ENCODE measurements at regions of chr1 and their contacts with region 1.

Region 1: DNA sequence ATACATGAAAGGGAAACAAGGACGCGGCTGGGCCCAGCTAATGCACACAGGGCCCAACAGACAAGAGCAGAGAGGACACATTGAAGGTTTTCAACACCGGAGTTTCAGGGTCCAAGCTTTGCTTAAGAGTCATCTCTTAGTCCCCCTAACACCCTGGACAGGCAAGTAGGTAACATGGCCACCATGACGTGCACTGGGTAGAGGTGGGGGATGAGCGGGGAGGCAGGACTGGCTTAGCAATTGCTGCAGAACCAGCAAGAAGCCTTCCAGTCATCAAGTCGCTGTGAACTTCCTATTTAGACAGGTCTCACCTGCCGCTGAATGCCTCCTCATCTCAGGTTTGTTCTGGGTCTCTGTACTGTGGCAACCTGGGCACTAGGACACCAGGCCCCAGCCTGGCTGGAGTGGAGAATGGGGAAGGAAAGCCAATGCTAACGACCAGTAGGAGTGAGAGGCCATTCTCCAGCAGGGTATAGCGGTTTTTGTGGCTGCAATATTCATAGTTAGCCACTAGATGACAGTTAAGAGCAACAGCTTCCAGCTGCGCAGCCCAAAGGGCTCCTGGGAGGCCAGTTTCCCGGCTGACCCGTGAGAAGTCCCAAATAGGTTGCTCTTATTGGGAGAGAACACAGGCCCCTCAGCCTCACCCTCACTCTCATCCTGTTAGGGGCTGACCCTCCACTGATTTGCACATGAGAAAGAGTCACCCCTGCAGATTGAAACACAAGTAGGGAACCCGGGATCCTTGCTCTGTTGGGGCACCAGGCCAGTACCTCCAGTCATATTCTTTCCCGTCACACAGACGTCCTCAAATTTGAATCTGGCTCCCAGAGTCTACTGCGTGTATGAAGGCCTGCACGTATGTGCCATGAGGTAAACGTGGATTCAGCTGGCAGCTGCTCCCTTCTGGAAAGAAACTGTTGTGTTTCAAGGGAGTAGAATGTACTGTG is 6.0 kb upstream of the PIGC start:
- DNase-seq: peak; percentile 42 to 80 (median 57)
- ATAC-seq: peak; percentile 87
- H3K4me3 ChIP-seq: no peak overlapping the region
- H3K27ac ChIP-seq: peak overlapping the region in 1 of 2 donors; percentile 1
- H3K4me1 ChIP-seq: peaks cover 12 to 37% of the 10 kb centered on the region in 2 donors
- H3K27me3 ChIP-seq: no peaks in the 10 kb centered on the region
- CTCF ChIP-seq: peak; percentile 84 to 93

Region 2: DNA sequence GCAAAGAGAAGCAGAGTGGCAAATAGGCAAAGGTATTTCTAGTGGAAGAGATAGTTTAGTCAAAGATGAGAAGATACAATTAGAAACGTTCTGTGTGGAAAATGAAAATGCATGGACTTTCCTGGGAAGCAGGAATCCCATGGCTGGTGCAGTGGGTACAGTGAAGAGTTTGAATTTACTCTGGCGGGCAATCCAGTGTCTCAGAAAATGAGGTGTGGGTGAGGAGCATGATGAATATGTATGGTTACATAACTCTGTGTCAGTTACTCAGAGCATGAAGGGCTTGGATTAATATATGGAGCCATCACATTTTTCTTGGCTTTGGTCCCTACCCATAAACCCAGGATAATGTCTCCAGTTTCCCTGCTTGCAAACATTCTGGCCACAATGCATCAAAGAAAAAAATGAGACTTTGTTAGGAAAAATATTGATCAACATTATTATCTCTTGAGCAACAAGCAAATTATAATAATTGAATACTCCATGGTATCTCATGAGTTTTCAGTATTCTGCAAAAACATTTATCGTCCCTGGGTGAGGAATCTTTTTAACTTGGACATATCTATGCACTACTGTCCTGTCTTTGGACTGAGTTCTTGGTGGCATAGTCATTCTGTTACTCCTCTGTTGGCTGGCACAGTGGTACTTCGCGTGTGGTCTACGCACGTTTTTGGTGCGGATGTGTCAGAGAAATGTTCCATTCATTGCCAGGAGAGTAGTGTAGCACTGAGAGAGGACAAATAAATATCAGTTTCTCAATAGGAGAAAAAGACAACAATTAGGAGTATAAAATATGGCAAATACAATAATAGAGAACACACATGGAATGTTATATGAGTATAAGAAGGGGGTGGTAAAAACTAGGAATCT is 203.1 kb before region 1 on chr1:
- intact Hi-C with region 1: no loop called
- DNase-seq: no peak
- ATAC-seq: no peak
- H3K4me3 ChIP-seq: no peak overlapping the region
- H3K27ac ChIP-seq: no peak overlapping the region
- H3K4me1 ChIP-seq: no peaks in the 10 kb centered on the region
- H3K27me3 ChIP-seq: no peaks in the 10 kb centered on the region
- CTCF ChIP-seq: no peak

Region 3: GRCh38 chr1:172286629-172287076 is 163.2 kb before region 1 on chr1:
- intact Hi-C with region 1: no loop called
- DNase-seq: peak in 1 of 4 donors; percentile 41
- ATAC-seq: peak; percentile 77
- H3K4me3 ChIP-seq: no peak overlapping the region
- H3K27ac ChIP-seq: peak overlapping the region in 1 of 2 donors; percentile 34
- H3K4me1 ChIP-seq: peaks cover 7 to 9% of the 10 kb centered on the region in 2 donors
- H3K27me3 ChIP-seq: no peaks in the 10 kb centered on the region
- CTCF ChIP-seq: no peak

Region 4: DNA sequence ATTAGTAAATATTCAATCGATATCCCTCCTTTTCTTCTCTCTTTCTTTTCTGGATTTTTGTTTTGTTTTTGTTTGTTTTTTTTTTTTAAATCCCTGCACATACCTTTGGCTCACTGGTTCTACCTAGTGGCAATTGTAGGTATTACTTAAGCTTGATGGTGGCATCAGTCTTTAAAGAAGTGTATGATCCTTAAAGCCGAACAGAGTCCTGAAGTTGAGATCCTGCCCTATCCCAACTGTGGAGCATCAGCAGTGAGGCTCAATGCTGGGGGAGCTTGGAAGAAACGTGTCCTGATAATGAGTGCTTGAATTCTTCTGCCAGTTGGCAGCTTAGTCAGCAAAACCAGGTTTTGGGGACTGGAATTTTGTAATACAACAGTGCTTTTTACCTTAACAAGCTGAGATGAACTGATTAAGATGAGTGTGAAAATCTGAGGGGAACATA is 269.9 kb after region 1 on chr1:
- intact Hi-C with region 1: loop called in 1 of 2 experiments (anchors 10 kb)
- DNase-seq: peak in 1 of 4 donors; percentile 31
- ATAC-seq: peak; percentile 85
- H3K4me3 ChIP-seq: no peak overlapping the region
- H3K27ac ChIP-seq: no peak overlapping the region
- H3K4me1 ChIP-seq: no peaks in the 10 kb centered on the region
- H3K27me3 ChIP-seq: no peaks in the 10 kb centered on the region
- CTCF ChIP-seq: peak; percentile 66 to 70

Measured in left lung (tissue), 14 donors.